Naive thymus-derived CD4-positive, alpha-beta T cell (primary cell): ENCODE measurements at regions of chr12 and their contacts with region 1.

Region 1: GRCh38 chr12:50074936-50075807 is 10.0 kb upstream of the SMARCD1 start:
- DNase-seq: peak; percentile 48 to 81 (median 69)
- ATAC-seq: peak; percentile 95
- H3K4me3 ChIP-seq: no peak overlapping the region
- H3K4me3 Mint-ChIP-seq: no peak overlapping the region
- H3K27ac ChIP-seq: no peak overlapping the region
- H3K27ac Mint-ChIP-seq: peak overlapping the region in 4 of 9 donors; percentile 36 to 59 (median 43)
- H3K4me1 ChIP-seq: peaks cover 0 to 4% of the 10 kb centered on the region in 2 donors
- H3K4me1 Mint-ChIP-seq: peaks cover 0 to 12% (median 7%) of the 10 kb centered on the region in 7 donors
- H3K27me3 ChIP-seq: no peaks in the 10 kb centered on the region
- H3K27me3 Mint-ChIP-seq: no peaks in the 10 kb centered on the region

Region 2: GRCh38 chr12:49866859-49867579 is 208.2 kb before region 1 on chr12:
- CTCF ChIA-PET with region 1: interaction called, 3 read pairs
- POLR2A ChIA-PET with region 1: no interaction called
- intact Hi-C with region 1: loop called in 1 of 2 experiments (anchors 1 kb)
- DNase-seq: peak; percentile 46 to 80 (median 62)
- ATAC-seq: peak; percentile 86
- H3K4me3 ChIP-seq: no peak overlapping the region
- H3K4me3 Mint-ChIP-seq: no peak overlapping the region
- H3K27ac ChIP-seq: no peak overlapping the region
- H3K27ac Mint-ChIP-seq: no peak overlapping the region
- H3K4me1 ChIP-seq: no peaks in the 10 kb centered on the region
- H3K4me1 Mint-ChIP-seq: peaks cover 0 to 6% (median 0%) of the 10 kb centered on the region in 7 donors
- H3K27me3 ChIP-seq: no peaks in the 10 kb centered on the region
- H3K27me3 Mint-ChIP-seq: peaks cover 0 to 4% (median 0%) of the 10 kb centered on the region in 5 donors

Region 3: GRCh38 chr12:50043854-50044253 is 31.3 kb before region 1 on chr12:
- CTCF ChIA-PET with region 1: interaction called, 47 read pairs
- POLR2A ChIA-PET with region 1: no interaction called
- intact Hi-C with region 1: loop called (anchors 1 kb)
- DNase-seq: no peak
- ATAC-seq: no peak
- H3K4me3 ChIP-seq: no peak overlapping the region
- H3K4me3 Mint-ChIP-seq: no peak overlapping the region
- H3K27ac ChIP-seq: no peak overlapping the region
- H3K27ac Mint-ChIP-seq: no peak overlapping the region
- H3K4me1 ChIP-seq: no peaks in the 10 kb centered on the region
- H3K4me1 Mint-ChIP-seq: peaks cover 0 to 21% (median 0%) of the 10 kb centered on the region in 7 donors
- H3K27me3 ChIP-seq: no peaks in the 10 kb centered on the region
- H3K27me3 Mint-ChIP-seq: peaks cover under 1 to 12% (median 1%) of the 10 kb centered on the region in 5 donors

Region 4: GRCh38 chr12:50132505-50133135 is 57.4 kb after region 1 on chr12:
- CTCF ChIA-PET with region 1: interaction called, 5 read pairs
- POLR2A ChIA-PET with region 1: no interaction called
- intact Hi-C with region 1: loop called in 1 of 2 experiments (anchors 1 kb)
- DNase-seq: peak in 7 of 9 donors; percentile 29 to 62 (median 49)
- ATAC-seq: peak; percentile 61
- H3K4me3 ChIP-seq: no peak overlapping the region
- H3K4me3 Mint-ChIP-seq: no peak overlapping the region
- H3K27ac ChIP-seq: no peak overlapping the region
- H3K27ac Mint-ChIP-seq: peak overlapping the region in 8 of 9 donors; percentile 2 to 79 (median 36)
- H3K4me1 ChIP-seq: no peaks in the 10 kb centered on the region
- H3K4me1 Mint-ChIP-seq: peaks cover 9 to 19% (median 14%) of the 10 kb centered on the region in 7 donors
- H3K27me3 ChIP-seq: no peaks in the 10 kb centered on the region
- H3K27me3 Mint-ChIP-seq: no peaks in the 10 kb centered on the region

Region 5: GRCh38 chr12:50314629-50315312 is 239.6 kb after region 1 on chr12:
- CTCF ChIA-PET with region 1: interaction called, 3 read pairs
- POLR2A ChIA-PET with region 1: no interaction called
- intact Hi-C with region 1: loop called in 1 of 2 experiments (anchors 2 kb)
- DNase-seq: no peak
- ATAC-seq: no peak
- H3K4me3 ChIP-seq: no peak overlapping the region
- H3K4me3 Mint-ChIP-seq: no peak overlapping the region
- H3K27ac ChIP-seq: no peak overlapping the region
- H3K27ac Mint-ChIP-seq: no peak overlapping the region
- H3K4me1 ChIP-seq: no peaks in the 10 kb centered on the region
- H3K4me1 Mint-ChIP-seq: peaks cover 0 to 3% (median 0%) of the 10 kb centered on the region in 7 donors
- H3K27me3 ChIP-seq: no peaks in the 10 kb centered on the region
- H3K27me3 Mint-ChIP-seq: no peaks in the 10 kb centered on the region